Left ventricle myocardium inferior (tissue), 1 donor: ENCODE measurements at regions of chr9 and their contacts with region 1.

Region 1: DNA sequence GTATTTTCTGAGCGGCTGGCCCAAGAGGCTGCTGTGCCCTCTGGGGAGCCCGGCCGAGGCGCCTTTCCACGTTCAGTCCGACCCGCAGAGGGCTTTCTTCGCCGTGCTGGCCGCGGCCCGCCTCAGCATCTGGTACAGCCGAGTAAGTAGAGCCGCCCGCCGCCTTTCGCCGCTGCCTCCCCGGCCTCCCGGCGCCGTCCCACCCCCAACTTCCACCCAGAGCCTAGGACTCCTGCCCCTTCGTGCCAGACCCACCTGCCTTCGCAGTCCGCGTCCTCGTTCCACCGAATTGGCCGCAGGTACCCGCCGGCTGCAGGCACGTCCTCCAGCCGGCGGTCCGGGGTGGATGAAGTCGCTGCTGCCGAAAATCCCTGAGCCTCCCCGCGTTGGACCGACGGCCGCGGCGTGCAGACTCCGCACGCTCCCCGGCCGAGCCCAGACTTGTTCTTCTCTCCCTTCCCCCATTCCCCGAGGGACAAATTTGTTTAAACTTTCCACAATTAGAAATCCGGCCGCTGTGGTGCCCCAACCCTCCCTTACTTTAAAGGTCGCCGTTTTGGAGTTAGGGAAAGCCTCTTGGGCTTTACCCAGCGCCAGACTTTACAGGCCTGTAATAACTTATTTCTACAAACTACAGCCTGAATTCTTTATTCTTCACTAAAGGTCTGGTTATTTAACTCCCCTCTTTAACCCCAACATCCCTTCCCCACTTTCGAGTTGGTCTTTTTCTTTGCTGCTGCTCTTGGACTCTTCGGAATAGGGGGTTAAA is 589 bp downstream of the RIC1 start:
- DNase-seq: peak; percentile 61
- H3K4me3 ChIP-seq: peak overlapping the region; percentile 98
- H3K27ac ChIP-seq: peak overlapping the region; percentile 99
- H3K4me1 ChIP-seq: peaks cover 86% of the 10 kb centered on the region
- H3K27me3 ChIP-seq: no peaks in the 10 kb centered on the region
- CTCF ChIP-seq: no peak

Region 2: GRCh38 chr9:5310851-5311250 is 318.6 kb before region 1 on chr9:
- intact Hi-C with region 1: no loop called
- DNase-seq: no peak
- H3K4me3 ChIP-seq: no peak overlapping the region
- H3K27ac ChIP-seq: no peak overlapping the region
- H3K4me1 ChIP-seq: no peaks in the 10 kb centered on the region
- H3K27me3 ChIP-seq: peaks cover 15% of the 10 kb centered on the region
- CTCF ChIP-seq: no peak

Region 3: DNA sequence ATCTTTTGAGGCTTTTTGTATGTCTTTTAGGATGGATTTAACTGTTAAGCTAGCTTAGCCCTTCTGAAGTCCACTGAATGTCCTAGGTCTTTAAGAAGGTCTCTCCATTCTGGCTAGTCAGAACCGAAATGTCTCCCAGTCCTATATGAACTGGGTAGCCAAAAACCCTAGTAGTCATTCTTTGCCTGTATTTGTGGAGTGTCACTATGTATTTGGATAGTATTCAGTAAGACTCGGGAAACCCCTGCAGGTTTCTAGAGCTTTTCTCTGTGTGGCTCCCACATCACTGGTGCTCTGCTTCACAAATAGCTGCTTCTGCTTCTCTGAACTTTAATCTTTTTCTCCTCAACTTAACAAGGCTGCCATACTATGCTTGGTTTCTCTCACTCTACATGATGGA is 67.4 kb after region 1 on chr9:
- intact Hi-C with region 1: loop called (anchors 10 kb)
- DNase-seq: no peak
- H3K4me3 ChIP-seq: no peak overlapping the region
- H3K27ac ChIP-seq: no peak overlapping the region
- H3K4me1 ChIP-seq: no peaks in the 10 kb centered on the region
- H3K27me3 ChIP-seq: no peaks in the 10 kb centered on the region
- CTCF ChIP-seq: no peak